WTC11 (cell line): ENCODE measurements at regions of chr5 and their contacts with region 1.

Region 1: GRCh38 chr5:88660947-88661805 is 221.8 kb downstream of the MEF2C start:
- DNase-seq: peak; percentile 97
- ATAC-seq: peak; percentile 90
- H3K4me3 Mint-ChIP-seq: peak overlapping the region; percentile 63
- H3K27ac Mint-ChIP-seq: peak overlapping the region; percentile 59
- H3K4me1 Mint-ChIP-seq: peaks cover 60% of the 10 kb centered on the region
- H3K27me3 Mint-ChIP-seq: peaks cover 85% of the 10 kb centered on the region
- CTCF ChIP-seq: no peak

Region 2: DNA sequence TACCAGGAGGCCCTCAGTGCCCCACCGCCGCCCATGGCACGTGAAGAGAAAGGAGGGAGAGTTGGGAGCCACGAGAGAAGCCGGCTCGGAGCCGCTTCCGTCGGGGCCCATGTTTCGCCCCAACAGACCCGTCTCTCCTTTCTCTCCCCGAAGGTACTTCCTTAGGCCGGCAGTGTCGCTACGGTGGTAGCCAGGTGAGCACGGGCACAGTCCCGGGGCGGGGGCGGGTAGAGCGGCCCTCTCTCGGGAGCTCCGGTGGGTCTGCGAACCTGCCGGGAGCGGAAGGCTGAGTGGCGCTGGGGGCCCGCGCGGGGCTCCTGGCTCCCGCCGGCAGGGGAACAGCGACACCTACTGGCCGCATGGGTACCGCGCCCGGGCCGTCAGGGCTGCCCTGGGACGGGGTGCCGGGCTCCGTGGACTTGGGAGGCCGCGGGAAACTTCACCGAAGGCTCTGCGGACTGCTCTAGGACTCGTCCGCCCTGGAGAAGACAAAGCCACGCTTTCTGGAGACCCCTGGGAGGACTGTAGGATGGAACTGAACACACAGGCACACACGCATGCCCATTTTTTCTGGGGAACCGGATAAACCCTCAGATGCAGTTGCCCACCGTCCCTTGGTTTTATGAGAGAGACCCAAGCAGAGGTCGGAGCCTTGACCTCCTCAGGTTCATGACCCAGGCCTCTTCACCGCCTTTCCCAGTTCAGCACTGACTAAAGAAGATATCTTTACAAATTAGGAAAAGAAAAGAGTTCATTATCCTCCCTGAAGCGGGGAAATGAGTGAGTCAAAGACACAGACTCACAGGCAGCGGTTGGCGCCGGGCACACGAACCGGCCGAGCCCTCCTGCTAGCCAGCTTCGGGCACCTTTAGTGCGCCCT is 19.3 kb after region 1 on chr5:
- CTCF ChIA-PET with region 1: interaction called, 23 read pairs
- POLR2A ChIA-PET with region 1: interaction called, 7 read pairs
- DNase-seq: peak; percentile 90
- ATAC-seq: peak; percentile 38
- H3K4me3 Mint-ChIP-seq: peak overlapping the region; percentile 61
- H3K27ac Mint-ChIP-seq: no peak overlapping the region
- H3K4me1 Mint-ChIP-seq: peaks cover 53% of the 10 kb centered on the region
- H3K27me3 Mint-ChIP-seq: peaks cover 98% of the 10 kb centered on the region
- CTCF ChIP-seq: peak; percentile 97

Region 3: GRCh38 chr5:88724201-88724600 is 63.0 kb after region 1 on chr5:
- CTCF ChIA-PET with region 1: interaction called, 10 read pairs
- POLR2A ChIA-PET with region 1: no interaction called
- DNase-seq: no peak
- ATAC-seq: no peak
- H3K4me3 Mint-ChIP-seq: no peak overlapping the region
- H3K27ac Mint-ChIP-seq: no peak overlapping the region
- H3K4me1 Mint-ChIP-seq: peaks cover 18% of the 10 kb centered on the region
- H3K27me3 Mint-ChIP-seq: peaks cover 19% of the 10 kb centered on the region
- CTCF ChIP-seq: no peak